Breast epithelium (tissue), 4 donors: ENCODE measurements at regions of chr1 and their contacts with region 1.

Region 1: DNA sequence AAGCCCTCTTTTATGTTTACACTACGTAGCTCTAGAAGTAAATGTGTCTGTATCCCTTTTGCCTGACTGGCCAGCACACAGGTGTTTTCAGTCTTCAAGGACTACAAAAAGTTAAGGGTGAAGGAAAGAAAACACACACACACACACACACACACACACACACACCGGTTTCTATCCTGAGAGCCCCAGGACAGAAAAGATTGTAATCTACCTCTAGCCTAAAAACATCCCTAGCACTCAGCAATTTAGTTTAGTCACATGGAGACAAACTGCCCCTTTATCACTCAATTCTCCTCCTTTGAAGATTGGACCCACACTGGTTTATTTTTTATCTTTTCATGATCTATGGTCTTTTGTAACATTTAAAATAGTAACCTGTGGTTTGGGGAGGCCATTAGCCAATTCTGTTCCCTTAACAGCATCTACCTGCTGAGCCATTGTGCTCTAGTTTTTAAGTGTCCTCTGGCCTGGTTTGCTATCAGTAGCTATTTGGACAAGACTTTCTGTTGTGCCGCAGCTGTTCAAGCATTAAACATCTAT is 15.8 kb upstream of the TRIM45 start:
- DNase-seq: no peak
- H3K4me3 ChIP-seq: no peak overlapping the region
- H3K27ac ChIP-seq: no peak overlapping the region
- H3K4me1 ChIP-seq: no peaks in the 10 kb centered on the region
- H3K27me3 ChIP-seq: no peaks in the 10 kb centered on the region
- CTCF ChIP-seq: no peak
- POLR2A ChIP-seq: no peak

Region 2: GRCh38 chr1:116997066-116997465 is 140.3 kb before region 1 on chr1:
- intact Hi-C with region 1: loop called (anchors 5 kb)
- DNase-seq: no peak
- H3K4me3 ChIP-seq: no peak overlapping the region
- H3K27ac ChIP-seq: peak overlapping the region in 1 of 2 donors; percentile 35
- H3K4me1 ChIP-seq: no peaks in the 10 kb centered on the region
- H3K27me3 ChIP-seq: no peaks in the 10 kb centered on the region
- CTCF ChIP-seq: no peak
- POLR2A ChIP-seq: no peak

Region 3: DNA sequence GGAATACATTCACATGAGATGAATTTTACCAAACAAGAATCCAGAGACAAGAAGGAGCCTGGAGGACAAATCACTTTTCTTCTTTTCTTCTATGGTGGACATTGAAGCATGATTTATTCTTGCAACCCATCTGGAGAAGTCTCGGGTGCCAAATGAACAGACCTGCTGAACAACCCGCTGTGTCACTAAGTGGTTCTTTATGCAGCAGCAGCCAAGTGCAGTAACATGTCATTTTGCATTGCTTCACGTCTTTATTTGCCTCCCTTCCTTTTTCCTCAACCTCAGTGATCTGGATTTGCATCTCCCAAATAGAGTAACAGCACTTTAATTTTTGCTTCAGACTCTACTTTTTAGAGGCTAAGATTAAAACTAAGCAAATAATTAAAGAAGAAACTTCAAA is 418.4 kb after region 1 on chr1:
- intact Hi-C with region 1: no loop called
- DNase-seq: no peak
- H3K4me3 ChIP-seq: no peak overlapping the region
- H3K27ac ChIP-seq: no peak overlapping the region
- H3K4me1 ChIP-seq: no peaks in the 10 kb centered on the region
- H3K27me3 ChIP-seq: no peaks in the 10 kb centered on the region
- CTCF ChIP-seq: no peak
- POLR2A ChIP-seq: no peak

Region 4: GRCh38 chr1:118049981-118050380 is 912.6 kb after region 1 on chr1:
- intact Hi-C with region 1: no loop called
- DNase-seq: no peak
- H3K4me3 ChIP-seq: no peak overlapping the region
- H3K27ac ChIP-seq: no peak overlapping the region
- H3K4me1 ChIP-seq: no peaks in the 10 kb centered on the region
- H3K27me3 ChIP-seq: no peaks in the 10 kb centered on the region
- CTCF ChIP-seq: no peak
- POLR2A ChIP-seq: no peak